Colonic mucosa (tissue), 4 donors: ENCODE measurements at regions of chr16 and their contacts with region 1.

Region 1: GRCh38 chr16:79571065-79571902 is 29.3 kb downstream of the MAF start:
- DNase-seq: no peak
- H3K4me3 ChIP-seq: no peak overlapping the region
- H3K27ac ChIP-seq: no peak overlapping the region
- H3K4me1 ChIP-seq: no peaks in the 10 kb centered on the region
- H3K27me3 ChIP-seq: no peaks in the 10 kb centered on the region
- CTCF ChIP-seq: no peak

Region 2: GRCh38 chr16:79169239-79169638 is 402.0 kb before region 1 on chr16:
- intact Hi-C with region 1: no loop called
- DNase-seq: no peak
- H3K4me3 ChIP-seq: no peak overlapping the region
- H3K27ac ChIP-seq: no peak overlapping the region
- H3K4me1 ChIP-seq: no peaks in the 10 kb centered on the region
- H3K27me3 ChIP-seq: no peaks in the 10 kb centered on the region
- CTCF ChIP-seq: no peak

Region 3: GRCh38 chr16:79528338-79528737 is 42.9 kb before region 1 on chr16:
- intact Hi-C with region 1: loop called (anchors 10 kb)
- DNase-seq: no peak
- H3K4me3 ChIP-seq: no peak overlapping the region
- H3K27ac ChIP-seq: no peak overlapping the region
- H3K4me1 ChIP-seq: no peaks in the 10 kb centered on the region
- H3K27me3 ChIP-seq: no peaks in the 10 kb centered on the region
- CTCF ChIP-seq: no peak

Region 4: DNA sequence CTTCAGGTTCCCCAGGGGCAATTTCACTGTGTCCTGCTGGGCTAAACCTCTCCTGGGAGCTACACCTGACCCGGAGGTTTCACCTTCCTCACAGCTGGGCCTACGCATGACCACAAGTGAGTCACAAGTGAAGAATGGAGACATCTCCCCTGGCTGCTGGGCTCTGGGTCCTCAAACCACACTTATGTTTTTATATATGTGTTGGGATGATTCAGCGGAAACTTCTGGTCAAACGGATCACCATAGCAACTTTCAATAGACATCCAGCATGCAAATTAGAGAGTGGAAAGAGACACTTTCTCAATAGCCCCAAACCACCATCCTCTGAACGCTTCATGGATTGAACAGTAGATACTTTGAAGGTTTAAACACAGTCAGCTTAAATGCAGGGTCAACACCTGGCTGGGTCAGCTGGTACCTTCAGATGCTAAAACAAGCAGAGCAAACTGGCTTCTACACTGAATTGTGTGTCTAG is 57.3 kb after region 1 on chr16:
- intact Hi-C with region 1: no loop called
- DNase-seq: no peak
- H3K4me3 ChIP-seq: no peak overlapping the region
- H3K27ac ChIP-seq: no peak overlapping the region
- H3K4me1 ChIP-seq: no peaks in the 10 kb centered on the region
- H3K27me3 ChIP-seq: no peaks in the 10 kb centered on the region
- CTCF ChIP-seq: no peak